ENCODE measurements at regions of chr5 and their contacts with region 1.

Region 1: DNA sequence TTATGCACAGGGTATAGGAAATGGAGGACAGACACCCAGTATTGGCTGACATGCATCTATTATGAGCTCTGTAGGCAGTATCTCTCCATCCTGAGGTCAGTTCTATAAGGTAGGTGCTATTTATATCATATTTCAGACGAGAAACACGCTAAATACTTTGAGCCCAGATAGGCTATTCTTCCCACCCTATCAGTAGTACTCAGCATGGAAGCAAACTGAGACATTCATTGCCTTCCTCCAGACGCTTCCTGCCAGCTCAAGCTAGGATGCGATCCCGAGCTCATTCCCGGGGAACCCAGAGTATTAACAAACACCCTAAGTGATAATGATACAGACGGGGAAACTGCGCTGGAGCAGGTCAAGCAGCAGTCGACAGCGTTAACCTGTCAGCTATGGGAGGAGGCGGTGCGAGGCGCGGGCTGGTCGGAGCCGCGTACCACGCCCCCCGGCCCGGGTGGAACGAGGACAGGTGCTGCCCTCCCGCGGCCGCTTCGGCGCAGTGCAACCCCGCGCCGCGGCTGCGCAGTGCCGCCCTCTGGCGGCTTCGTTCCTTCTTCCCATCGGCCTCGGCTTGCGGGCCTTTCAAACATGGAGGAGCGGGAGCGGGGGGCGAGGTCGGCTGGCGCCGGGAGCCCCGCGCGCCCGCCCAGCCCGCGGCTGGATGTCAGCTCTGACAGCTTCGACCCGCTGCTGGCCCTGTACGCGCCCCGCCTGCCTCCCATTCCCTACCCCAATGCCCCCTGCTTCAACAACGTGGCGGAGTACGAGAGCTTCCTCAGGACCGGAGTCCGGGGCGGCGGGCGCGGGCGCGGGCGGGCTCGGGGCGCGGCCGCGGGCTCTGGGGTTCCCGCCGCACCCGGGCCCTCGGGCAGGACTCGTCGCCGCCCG is at the start of gene LSM11:
- DNase-seq: peak; percentile 98
- H3K4me3 ChIP-seq: peak within 1 kb of the TSS; percentile 76 to 83
- H3K27ac ChIP-seq: peak within 1 kb of the TSS in 1 of 2 experiments; percentile 56; a peak in 1 of 4 replicates
- H3K4me1 ChIP-seq: peaks cover 0 to 18% of the 10 kb centered on the region in 2 experiments; a peak in 2 of 4 replicates
- H3K27me3 ChIP-seq: no peaks in the 10 kb centered on the region
- CTCF ChIP-seq: peak; percentile 93
- EP300 ChIP-seq: no peak; a peak in 1 of 4 replicates
- RAD21 ChIP-seq: peak; percentile 79
- polyA plus RNA-seq, gene LSM11: 0.95 and 1.3 TPM in 2 replicates

Region 2: DNA sequence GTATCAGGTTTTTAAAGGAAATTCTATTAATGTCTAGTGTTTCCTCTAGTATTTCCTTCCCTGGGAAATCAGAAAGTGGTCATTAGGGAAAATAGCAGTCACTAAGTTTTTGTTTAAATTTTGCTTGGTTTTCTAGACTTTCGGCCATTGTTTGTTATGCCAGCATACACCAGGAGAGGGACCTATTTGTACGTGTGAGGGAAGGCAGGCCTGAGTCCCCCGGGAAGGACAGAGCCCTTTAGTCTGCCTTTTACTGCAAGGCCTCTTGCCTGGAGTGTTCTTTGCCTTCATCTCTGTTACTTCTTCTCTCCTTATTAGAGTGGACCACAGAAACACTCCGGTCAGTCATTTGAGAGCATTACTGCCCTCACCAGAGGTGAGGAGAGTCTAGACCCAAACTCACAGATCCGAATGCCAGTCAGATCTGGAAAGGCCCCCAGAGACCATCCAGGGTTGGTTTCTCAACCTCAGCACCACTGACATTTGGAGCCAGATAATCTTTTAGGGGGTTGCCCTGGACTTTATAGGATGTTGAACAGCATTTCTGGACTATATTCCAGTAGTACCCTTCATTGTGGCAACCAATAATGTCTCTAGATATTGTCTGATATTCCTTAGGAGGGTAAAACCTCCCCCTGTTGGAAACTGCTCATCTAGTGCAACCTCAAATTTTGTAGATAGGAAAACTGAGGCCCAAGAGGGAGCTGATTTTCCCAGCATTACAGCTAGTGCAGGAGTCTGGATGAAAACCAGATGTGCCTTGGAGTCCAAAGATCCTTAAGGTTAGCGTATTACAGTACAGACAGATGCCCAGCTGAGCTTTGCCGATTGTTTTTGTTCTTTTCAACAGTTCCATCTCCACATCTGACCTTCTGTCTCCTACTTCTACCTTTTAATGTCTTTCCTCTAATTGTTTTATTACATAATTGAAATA is 376.4 kb before region 1 on chr5:
- CTCF ChIA-PET with region 1: no interaction called
- POLR2A ChIA-PET with region 1: no interaction called
- DNase-seq: peak; percentile 53
- H3K4me3 ChIP-seq: peak overlapping the region in 1 of 2 experiments; percentile 30; a peak in 1 of 4 replicates
- H3K27ac ChIP-seq: peak overlapping the region; percentile 83 to 85
- H3K4me1 ChIP-seq: peaks cover 10 to 32% of the 10 kb centered on the region in 2 experiments
- H3K27me3 ChIP-seq: no peaks in the 10 kb centered on the region
- CTCF ChIP-seq: peak; percentile 84
- EP300 ChIP-seq: no peak
- RAD21 ChIP-seq: peak; percentile 85

Region 3: DNA sequence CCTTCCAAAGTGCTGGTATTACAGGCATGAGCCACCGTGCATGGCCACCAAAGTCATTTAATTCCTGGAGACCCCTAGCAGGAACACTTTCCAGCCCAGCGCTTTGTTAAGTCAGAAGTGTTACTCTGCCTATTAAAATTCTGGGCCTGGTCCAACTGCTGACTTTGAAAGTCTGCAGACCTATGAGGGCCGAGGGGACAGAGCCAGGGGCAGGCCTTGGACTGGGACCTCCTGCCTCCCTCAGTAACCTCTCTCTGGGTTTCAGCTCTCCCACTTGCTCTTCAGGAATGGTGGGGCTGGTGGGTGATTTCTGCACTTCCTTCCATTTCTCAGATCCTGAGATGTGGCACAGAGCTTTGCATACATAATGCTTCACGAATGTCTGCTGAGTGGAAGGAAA is 62.4 kb before region 1 on chr5:
- CTCF ChIA-PET with region 1: no interaction called
- POLR2A ChIA-PET with region 1: no interaction called
- DNase-seq: no peak
- H3K4me3 ChIP-seq: no peak overlapping the region
- H3K27ac ChIP-seq: no peak overlapping the region
- H3K4me1 ChIP-seq: no peaks in the 10 kb centered on the region
- H3K27me3 ChIP-seq: no peaks in the 10 kb centered on the region
- CTCF ChIP-seq: no peak
- EP300 ChIP-seq: no peak
- RAD21 ChIP-seq: no peak

Region 4: DNA sequence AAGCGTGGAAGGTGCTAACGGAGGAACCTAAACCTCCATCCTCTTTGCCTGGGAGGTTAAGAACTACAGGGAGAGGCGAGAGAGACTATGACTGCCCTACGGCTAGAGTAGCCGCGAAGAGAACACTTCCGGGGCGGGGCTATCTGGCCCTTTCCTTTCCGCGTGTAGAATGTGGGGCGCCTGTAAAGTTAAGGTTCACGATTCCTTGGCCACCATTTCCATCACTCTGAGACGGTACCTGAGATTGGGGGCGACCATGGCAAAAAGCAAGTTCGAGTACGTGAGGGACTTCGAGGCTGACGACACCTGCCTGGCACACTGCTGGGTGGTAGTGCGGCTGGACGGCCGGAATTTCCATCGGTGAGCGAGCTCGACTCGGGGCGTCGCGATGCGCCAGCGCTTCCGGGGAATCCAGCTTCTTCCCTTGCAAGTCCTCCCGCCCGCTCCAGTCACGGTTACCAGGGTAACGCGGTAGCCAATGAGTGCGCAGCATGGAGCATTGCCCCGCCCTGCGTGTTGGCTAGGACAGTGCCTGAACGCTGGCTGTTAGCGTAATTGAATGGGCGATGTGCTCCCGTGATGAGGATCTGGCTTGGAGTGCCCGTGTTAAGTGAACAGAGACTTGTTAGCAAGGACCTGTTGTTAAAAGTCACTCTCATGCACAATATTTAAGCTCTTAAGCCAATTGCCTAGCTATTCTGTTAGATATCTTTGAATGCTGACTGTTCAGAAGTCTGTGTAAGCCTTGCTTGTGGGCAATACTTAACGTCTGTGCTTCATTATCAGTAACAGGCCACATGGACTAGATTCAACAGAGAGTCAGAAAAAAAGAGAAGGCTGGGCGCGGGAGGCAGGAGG is 11.9 kb before region 1 on chr5 and contains the start of gene THG1L:
- CTCF ChIA-PET with region 1: interaction called, 30 read pairs
- POLR2A ChIA-PET with region 1: interaction called, 18 read pairs
- DNase-seq: peak; percentile 91
- H3K4me3 ChIP-seq: peak within 1 kb of the TSS; percentile 84 to 93
- H3K27ac ChIP-seq: peak within 1 kb of the TSS; percentile 96 to 99
- H3K4me1 ChIP-seq: peaks cover 0 to 10% of the 10 kb centered on the region in 2 experiments; a peak in 2 of 4 replicates
- H3K27me3 ChIP-seq: no peaks in the 10 kb centered on the region
- CTCF ChIP-seq: no peak
- EP300 ChIP-seq: no peak
- RAD21 ChIP-seq: no peak
- polyA plus RNA-seq, gene THG1L: 32.0 and 37.0 TPM in 2 replicates